K562 (cell line): ENCODE measurements at regions of chr1 and their contacts with region 1.

Region 1: GRCh38 chr1:23959041-23959460 is 577 bp upstream of the PNRC2 start:
- DNase-seq: peak; percentile 86 to 97 (median 92)
- ATAC-seq: peak; percentile 77
- H3K4me3 ChIP-seq: peak overlapping the region; percentile 93
- H3K27ac ChIP-seq: peak overlapping the region; percentile 98
- H3K4me1 ChIP-seq: peaks cover 19 to 20% of the 10 kb centered on the region in 2 experiments; a peak in 4 of 5 replicates
- H3K27me3 ChIP-seq: no peaks in the 10 kb centered on the region
- CTCF ChIP-seq: peak in 2 of 3 experiments; percentile 46; a peak in 3 of 6 replicates
- EP300 ChIP-seq: peak; percentile 46; the same call in 1 of the 2 replicates
- POLR2A ChIP-seq: no peak; the same call in none of the 2 replicates
- RAD21 ChIP-seq: peak; percentile 43 to 45

Region 2: DNA sequence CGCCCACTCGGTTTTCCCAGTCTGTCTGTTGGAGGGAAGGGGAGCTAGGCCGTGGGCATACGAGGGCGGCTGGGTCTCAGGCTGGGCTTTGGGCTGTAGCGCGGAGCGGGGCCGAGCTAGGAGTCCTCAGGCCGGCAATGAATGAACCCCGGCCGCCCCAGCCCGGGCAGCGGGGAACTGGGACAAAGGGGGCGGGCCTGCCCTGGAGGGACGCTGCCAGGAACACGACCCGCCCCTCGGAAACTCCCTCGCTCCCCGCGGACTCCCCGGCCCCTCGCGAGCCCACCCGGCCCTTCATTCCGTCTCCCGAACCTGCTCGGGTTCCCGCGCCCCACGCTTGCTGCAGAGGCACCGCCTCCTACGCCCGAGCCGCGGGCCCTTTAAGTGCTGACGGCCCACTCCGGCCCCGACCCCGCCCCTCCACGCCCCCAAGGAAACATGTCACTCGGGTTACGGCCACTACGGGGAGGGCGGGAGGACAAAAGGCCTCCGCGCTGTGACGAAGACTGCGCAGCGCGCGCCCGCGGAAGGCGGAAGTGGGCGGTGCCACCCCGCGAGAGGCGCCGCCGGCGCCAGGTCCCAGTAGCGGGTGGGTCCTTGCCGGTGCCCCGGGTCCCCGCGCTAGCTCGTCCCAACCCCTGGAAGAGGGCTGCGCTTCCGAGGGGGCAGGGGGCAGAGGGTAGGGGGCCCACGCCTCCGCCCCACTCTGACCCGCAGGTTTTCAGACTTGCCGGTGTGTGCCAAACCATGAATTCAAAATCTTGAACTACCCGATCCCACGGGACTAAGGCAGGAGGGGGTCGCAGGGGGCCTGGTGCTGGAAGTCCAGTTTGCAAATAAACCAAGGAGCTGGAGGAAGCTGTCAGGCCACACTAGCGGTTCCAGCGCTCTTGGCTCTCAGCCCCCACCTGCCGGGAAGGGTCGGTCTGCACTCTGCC is 158.4 kb before region 1 on chr1 and contains the start of gene GALE:
- CTCF ChIA-PET with region 1: no interaction called
- POLR2A ChIA-PET with region 1: interaction called, 12 read pairs
- in situ Hi-C with region 1: no loop called
- intact Hi-C with region 1: no loop called
- DNase-seq: peak; percentile 96 to 100 (median 97)
- ATAC-seq: peak; percentile 90
- H3K4me3 ChIP-seq: peak within 1 kb of the TSS; percentile 80
- H3K27ac ChIP-seq: peak within 1 kb of the TSS; percentile 74
- H3K4me1 ChIP-seq: peaks cover 21 to 40% of the 10 kb centered on the region in 2 experiments
- H3K27me3 ChIP-seq: no peaks in the 10 kb centered on the region
- CTCF ChIP-seq: no peak
- EP300 ChIP-seq: peak; percentile 63; the same call in 1 of the 2 replicates
- POLR2A ChIP-seq: peak; percentile 89
- RAD21 ChIP-seq: no peak
- polyA plus RNA-seq, gene GALE: 8.4 to 48.4 TPM

Region 3: DNA sequence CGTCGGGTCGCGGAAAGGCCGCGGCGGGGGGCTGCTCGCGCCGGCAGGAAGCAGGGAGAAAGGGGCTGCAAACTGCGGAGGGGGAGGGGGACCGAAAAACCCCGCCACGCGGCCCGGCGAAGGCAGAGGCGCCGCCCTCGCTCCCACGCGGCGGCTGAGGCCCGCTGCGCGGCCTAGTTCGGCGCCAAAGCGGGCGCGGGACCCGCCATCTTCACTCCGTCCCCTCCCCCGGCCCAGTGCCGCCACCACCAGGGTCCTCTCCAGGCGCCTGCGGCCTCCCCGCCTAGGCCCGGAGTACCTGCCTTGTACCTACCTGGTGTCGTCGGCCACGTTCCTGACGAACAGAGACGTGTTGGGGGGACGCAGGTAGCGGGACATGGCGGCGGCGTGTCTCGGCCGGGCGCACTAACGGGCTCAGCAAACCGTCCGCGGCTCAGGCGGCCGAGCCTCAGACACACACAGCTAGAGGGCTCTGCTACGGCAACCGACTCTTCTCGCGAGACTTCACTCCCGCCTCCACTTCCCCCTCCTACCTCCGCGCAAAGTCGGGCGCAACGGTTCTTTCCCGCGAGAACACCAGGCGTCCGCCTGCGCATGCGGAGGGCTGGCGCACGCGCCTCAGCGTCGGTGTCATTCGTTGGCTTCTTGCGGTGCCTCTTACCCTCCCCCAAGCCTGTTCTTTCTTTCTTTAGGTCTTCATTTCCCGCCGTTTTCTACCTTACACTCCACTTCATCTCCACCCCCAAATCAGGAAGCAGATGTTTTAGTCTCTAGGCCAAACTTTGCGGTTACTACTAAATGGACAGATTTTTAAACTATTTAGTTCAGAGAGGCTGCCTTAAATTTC is 21.1 kb after region 1 on chr1 and contains the start of gene SRSF10:
- CTCF ChIA-PET with region 1: no interaction called
- POLR2A ChIA-PET with region 1: interaction called, 82 read pairs
- in situ Hi-C with region 1: no loop called
- intact Hi-C with region 1: loop called (anchors 1 kb)
- DNase-seq: peak; percentile 98 to 100 (median 98)
- ATAC-seq: peak; percentile 96
- H3K4me3 ChIP-seq: peak within 1 kb of the TSS; percentile 87
- H3K27ac ChIP-seq: peak within 1 kb of the TSS; percentile 97
- H3K4me1 ChIP-seq: peaks cover 12 to 20% of the 10 kb centered on the region in 2 experiments
- H3K27me3 ChIP-seq: no peaks in the 10 kb centered on the region
- CTCF ChIP-seq: peak; percentile 26 to 60 (median 38); a peak in 5 of 6 replicates
- EP300 ChIP-seq: peak; percentile 43
- POLR2A ChIP-seq: peak; percentile 99
- RAD21 ChIP-seq: 0 out of 4 replicates have a peak, but pooled peaks of 1 of the 2 experiments have one; percentile 17
- polyA plus RNA-seq, gene SRSF10: 191 to 226 TPM

Region 4: GRCh38 chr1:24027838-24028468 is 68.9 kb after region 1 on chr1:
- CTCF ChIA-PET with region 1: no interaction called
- POLR2A ChIA-PET with region 1: interaction called, 3 read pairs
- in situ Hi-C with region 1: no loop called
- intact Hi-C with region 1: loop called (anchors 2 kb)
- DNase-seq: peak in 1 of 4 experiments; percentile 32
- ATAC-seq: peak; percentile 83
- H3K4me3 ChIP-seq: no peak overlapping the region
- H3K27ac ChIP-seq: no peak overlapping the region
- H3K4me1 ChIP-seq: 0 out of 5 replicates have a peak, but pooled peaks cover 0 to 3% of the 10 kb centered on the region in 2 experiments
- H3K27me3 ChIP-seq: peaks cover 2 to 12% of the 10 kb centered on the region in 2 experiments; a peak in 2 of 5 replicates
- CTCF ChIP-seq: peak; percentile 31 to 71 (median 43); a peak in 4 of 6 replicates
- EP300 ChIP-seq: no peak
- POLR2A ChIP-seq: no peak
- RAD21 ChIP-seq: peak; percentile 49 to 80; a peak in 3 of 4 replicates

Region 5: DNA sequence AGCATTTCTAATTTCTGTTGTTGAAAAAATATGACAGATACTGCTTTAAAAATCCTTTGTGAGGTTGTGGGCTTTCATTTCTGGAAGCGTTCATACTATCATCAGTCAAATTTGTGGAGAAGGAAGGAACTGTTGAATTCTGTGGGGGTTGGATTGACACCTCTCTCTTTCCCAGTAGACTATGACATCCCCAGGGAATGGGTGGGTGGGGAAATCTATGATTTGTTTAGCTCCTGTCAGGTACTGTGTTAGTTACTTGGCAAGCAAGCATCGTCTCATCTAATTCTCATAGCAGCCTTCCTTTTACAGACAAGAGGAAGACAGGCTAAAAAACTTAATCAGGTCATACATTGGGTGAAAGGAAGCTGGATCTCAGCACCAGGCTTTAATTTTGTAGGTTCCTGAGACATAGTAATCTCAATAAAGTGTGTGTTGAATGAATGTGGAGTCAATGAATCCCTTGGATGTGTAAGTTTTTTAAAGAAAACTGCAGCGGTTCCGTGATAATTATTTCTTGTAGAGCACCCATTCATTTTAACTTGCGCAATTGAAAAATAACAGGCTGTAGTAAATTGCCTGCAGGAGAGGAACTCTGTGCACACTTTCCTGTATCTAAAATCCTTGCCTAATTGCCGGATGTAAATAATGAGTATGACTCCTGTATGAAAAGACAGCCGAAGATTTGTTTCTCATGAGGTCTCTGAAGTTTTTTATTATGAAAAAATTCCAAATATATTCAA is 92.3 kb after region 1 on chr1:
- CTCF ChIA-PET with region 1: no interaction called
- POLR2A ChIA-PET with region 1: no interaction called
- in situ Hi-C with region 1: no loop called
- intact Hi-C with region 1: no loop called
- DNase-seq: no peak
- ATAC-seq: no peak
- H3K4me3 ChIP-seq: no peak overlapping the region
- H3K27ac ChIP-seq: no peak overlapping the region
- H3K4me1 ChIP-seq: peaks cover 0 to 2% of the 10 kb centered on the region in 2 experiments; a peak in 1 of 5 replicates
- H3K27me3 ChIP-seq: peaks cover 34 to 63% of the 10 kb centered on the region in 2 experiments
- CTCF ChIP-seq: no peak
- EP300 ChIP-seq: no peak
- POLR2A ChIP-seq: no peak
- RAD21 ChIP-seq: no peak